Activated CD4-positive, alpha-beta T cell treated with anti-CD3 and anti-CD28 coated beads, Interleukin-2, amount 10 ng/mL, durations not matched to agents 7 days and 5 days (primary cell): ENCODE measurements at regions of chr10 and their contacts with region 1.

Region 1: DNA sequence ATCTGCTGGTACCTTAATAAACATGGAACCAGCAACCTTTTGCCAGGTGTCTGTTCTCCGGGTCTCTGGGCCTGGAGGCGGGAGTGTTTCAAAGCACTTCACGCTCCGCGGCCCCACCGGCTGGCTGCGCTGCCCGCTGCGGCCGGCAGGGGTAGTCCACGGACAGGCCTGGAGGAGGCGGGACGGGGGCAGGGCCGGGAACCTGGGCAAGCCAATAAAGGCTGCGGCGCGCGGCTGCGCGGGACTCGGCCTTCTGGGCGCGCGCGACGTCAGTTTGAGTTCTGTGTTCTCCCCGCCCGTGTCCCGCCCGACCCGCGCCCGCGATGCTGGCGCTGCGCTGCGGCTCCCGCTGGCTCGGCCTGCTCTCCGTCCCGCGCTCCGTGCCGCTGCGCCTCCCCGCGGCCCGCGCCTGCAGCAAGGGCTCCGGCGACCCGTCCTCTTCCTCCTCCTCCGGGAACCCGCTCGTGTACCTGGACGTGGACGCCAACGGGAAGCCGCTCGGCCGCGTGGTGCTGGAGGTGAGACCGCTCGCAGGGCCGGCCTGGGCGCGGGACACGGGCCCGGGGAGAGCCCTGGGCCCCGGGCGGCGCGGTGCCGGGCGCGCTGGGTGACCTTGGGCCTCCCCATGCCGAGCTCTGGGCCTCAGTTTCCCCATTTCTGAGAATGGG is at the start of gene PPIF:
- DNase-seq: peak; percentile 93
- H3K4me3 Mint-ChIP-seq: peak within 1 kb of the TSS; percentile 84
- H3K27ac Mint-ChIP-seq: peak within 1 kb of the TSS; percentile 93
- H3K4me1 Mint-ChIP-seq: peaks cover 44% of the 10 kb centered on the region
- H3K27me3 Mint-ChIP-seq: no peaks in the 10 kb centered on the region
- total RNA-seq, gene PPIF: 53.7 to 56.7 TPM

Region 2: DNA sequence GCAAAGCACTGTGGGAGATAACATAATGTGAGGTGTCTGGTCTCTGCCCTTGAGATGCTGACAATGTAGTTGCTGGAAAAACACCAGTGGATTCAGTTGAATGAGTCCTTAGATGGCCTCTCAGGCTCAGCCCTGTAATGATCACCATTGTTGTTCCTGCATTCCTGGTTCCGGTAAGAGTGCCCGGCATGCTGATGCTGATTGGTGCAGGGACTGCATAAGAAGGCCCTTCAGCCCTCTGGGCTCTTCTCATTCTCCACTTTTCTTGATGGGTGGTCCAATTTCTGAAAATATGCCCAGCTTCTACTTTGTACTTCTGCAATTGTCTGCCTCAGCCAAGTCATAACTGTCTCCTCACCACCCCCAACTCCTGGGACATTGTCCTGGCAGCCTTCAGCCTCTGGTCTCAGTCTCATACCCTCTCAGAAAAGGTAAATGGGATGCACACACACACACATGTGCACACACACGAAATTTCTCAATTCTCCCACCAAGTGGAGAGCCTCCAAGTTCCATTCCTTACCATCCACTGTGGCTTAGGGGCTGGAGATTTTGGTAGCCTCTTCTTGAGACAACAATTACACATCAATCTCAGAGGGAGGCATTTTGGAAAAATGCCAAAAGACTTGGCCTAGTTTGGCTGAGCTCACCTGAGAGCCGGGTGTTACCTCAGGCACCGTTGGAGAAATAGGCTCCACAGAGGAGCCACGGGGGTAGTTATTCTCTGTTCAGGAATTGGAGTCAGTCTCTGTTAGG is 998.8 kb before region 1 on chr10:
- CTCF ChIA-PET with region 1: no interaction called
- POLR2A ChIA-PET with region 1: no interaction called
- DNase-seq: no peak
- H3K4me3 Mint-ChIP-seq: no peak overlapping the region
- H3K27ac Mint-ChIP-seq: no peak overlapping the region
- H3K4me1 Mint-ChIP-seq: no peaks in the 10 kb centered on the region
- H3K27me3 Mint-ChIP-seq: peaks cover 11% of the 10 kb centered on the region

Region 3: DNA sequence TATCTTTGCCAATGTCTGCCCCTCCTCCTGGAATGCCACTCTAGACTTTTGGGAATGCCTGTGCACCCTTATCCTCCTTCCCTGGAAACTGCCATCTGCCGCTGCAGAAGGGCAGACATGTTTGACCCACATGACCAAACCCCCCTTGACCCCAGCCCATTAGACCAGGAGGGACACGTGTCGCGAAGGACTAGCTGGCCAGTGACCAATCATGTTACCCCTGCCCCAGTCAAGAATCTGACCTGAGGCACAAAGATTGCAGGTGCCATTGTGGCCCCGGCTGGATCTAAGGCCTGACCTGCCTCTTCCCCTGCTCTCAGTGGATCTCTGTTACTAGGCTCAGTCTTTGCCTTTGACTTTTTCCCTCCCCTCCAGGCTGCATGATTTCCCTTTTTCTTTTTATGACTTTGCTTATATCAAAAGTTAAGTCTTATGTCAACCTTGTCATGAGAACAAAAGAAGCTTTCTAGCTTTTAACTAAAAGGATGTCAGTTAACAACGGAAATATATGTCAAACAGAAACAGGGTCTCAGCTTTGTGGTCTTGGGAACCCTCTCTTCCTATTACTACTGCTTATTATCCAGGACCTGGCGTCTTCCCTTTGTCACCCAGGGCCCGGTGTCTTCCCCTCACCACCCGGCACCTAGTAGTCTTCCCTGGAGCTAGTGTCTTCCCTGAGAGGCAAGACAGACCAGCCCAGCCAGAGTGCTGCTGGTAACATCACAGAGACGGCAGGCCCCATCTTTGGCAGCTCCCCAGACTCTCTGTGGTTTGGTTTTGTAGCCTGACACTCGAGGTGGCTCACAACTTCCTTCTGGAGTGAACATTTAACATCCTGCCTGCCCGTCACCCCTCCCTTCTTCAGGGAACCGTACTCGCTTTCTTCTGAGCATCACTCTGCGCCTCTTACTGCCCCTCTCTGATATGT is 24.5 kb before region 1 on chr10:
- CTCF ChIA-PET with region 1: interaction called, 147 read pairs
- POLR2A ChIA-PET with region 1: interaction called, 3 read pairs
- DNase-seq: peak; percentile 87
- H3K4me3 Mint-ChIP-seq: peak overlapping the region; percentile 56
- H3K27ac Mint-ChIP-seq: peak overlapping the region; percentile 97
- H3K4me1 Mint-ChIP-seq: peaks cover 74% of the 10 kb centered on the region
- H3K27me3 Mint-ChIP-seq: no peaks in the 10 kb centered on the region

Region 4: DNA sequence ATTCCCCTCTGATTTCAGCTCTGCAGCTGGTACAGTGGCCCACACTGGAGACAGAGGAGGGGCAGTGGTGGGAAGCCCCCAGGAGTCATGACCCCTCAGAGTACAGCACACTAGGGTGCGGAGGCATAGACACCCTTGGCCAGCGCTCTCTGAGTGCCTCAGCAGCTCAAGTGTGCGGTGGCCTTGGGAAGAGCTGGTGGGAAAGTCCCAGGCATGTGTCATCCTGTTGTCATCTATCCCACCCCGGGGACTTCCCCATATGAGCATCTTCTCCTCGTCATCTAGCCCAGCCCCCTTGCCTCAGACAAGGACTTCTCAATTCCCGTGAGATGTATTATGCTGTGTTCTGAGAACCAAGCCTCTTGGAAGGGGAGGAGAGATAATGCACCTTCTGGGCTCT is 15.7 kb before region 1 on chr10:
- CTCF ChIA-PET with region 1: interaction called, 147 read pairs
- POLR2A ChIA-PET with region 1: interaction called, 3 read pairs
- DNase-seq: peak; percentile 52
- H3K4me3 Mint-ChIP-seq: no peak overlapping the region
- H3K27ac Mint-ChIP-seq: peak overlapping the region; percentile 57
- H3K4me1 Mint-ChIP-seq: peaks cover 26% of the 10 kb centered on the region
- H3K27me3 Mint-ChIP-seq: no peaks in the 10 kb centered on the region

Region 5: GRCh38 chr10:79358783-79359182 is 11.4 kb after region 1 on chr10:
- CTCF ChIA-PET with region 1: interaction called, 11 read pairs
- POLR2A ChIA-PET with region 1: no interaction called
- DNase-seq: no peak
- H3K4me3 Mint-ChIP-seq: no peak overlapping the region
- H3K27ac Mint-ChIP-seq: no peak overlapping the region
- H3K4me1 Mint-ChIP-seq: peaks cover 24% of the 10 kb centered on the region
- H3K27me3 Mint-ChIP-seq: peaks cover 11% of the 10 kb centered on the region